ENCODE measurements at regions of chr17 and their contacts with region 1.

Region 1: GRCh38 chr17:43846221-43846712 is 709 bp upstream of the CD300LG start:
- DNase-seq: peak; percentile 68 to 87 (median 82)
- H3K4me3 ChIP-seq: no peak overlapping the region
- H3K27ac ChIP-seq: no peak overlapping the region
- H3K4me1 ChIP-seq: no peaks in the 10 kb centered on the region
- H3K27me3 ChIP-seq: no peaks in the 10 kb centered on the region
- CTCF ChIP-seq: peak; percentile 77 to 84 (median 82)
- EP300 ChIP-seq: no peak
- POLR2A ChIP-seq: no peak

Region 2: GRCh38 chr17:43694077-43694870 is 152.0 kb before region 1 on chr17:
- intact Hi-C with region 1: loop called in 1 of 4 experiments (anchors 10 kb)
- DNase-seq: peak; percentile 63 to 74 (median 68)
- H3K4me3 ChIP-seq: no peak overlapping the region
- H3K27ac ChIP-seq: no peak overlapping the region
- H3K4me1 ChIP-seq: no peaks in the 10 kb centered on the region
- H3K27me3 ChIP-seq: no peaks in the 10 kb centered on the region
- CTCF ChIP-seq: peak; percentile 58 to 81 (median 77)
- EP300 ChIP-seq: no peak
- POLR2A ChIP-seq: no peak

Region 3: GRCh38 chr17:43778337-43779144 is 67.7 kb before region 1 on chr17 and contains the start of gene DUSP3:
- intact Hi-C with region 1: loop called in 1 of 4 experiments (anchors 10 kb)
- DNase-seq: peak; percentile 94 to 96 (median 94)
- H3K4me3 ChIP-seq: peak within 1 kb of the TSS; percentile 78
- H3K27ac ChIP-seq: peak within 1 kb of the TSS; percentile 87 to 99
- H3K4me1 ChIP-seq: peaks cover 4% of the 10 kb centered on the region
- H3K27me3 ChIP-seq: no peaks in the 10 kb centered on the region
- CTCF ChIP-seq: peak in 1 of 3 donors; percentile 17
- EP300 ChIP-seq: peak; percentile 81
- POLR2A ChIP-seq: peak; percentile 79
- total RNA-seq, gene DUSP3: 14.2 to 38.7 (median 33.0) TPM

Region 4: GRCh38 chr17:44385287-44386181 is 539.3 kb after region 1 on chr17:
- intact Hi-C with region 1: no loop called
- DNase-seq: peak; percentile 89 to 93 (median 91)
- H3K4me3 ChIP-seq: peak overlapping the region; percentile 53
- H3K27ac ChIP-seq: no peak overlapping the region
- H3K4me1 ChIP-seq: peaks cover 2% of the 10 kb centered on the region
- H3K27me3 ChIP-seq: no peaks in the 10 kb centered on the region
- CTCF ChIP-seq: peak in 1 of 3 donors; percentile 10
- EP300 ChIP-seq: no peak
- POLR2A ChIP-seq: peak; percentile 37